Activated CD8-positive, alpha-beta T cell treated with anti-CD3 and anti-CD28 coated beads, Interleukin-2, amount 10 ng/mL, durations not matched to agents 7 days and 5 days (primary cell): ENCODE measurements at regions of chr11 and their contacts with region 1.

Region 1: GRCh38 chr11:22787551-22788162 is 41.9 kb downstream of the SVIP start:
- DNase-seq: peak; percentile 44
- ATAC-seq: peak; percentile 70
- H3K4me3 Mint-ChIP-seq: no peak overlapping the region
- H3K27ac Mint-ChIP-seq: no peak overlapping the region
- H3K4me1 Mint-ChIP-seq: no peaks in the 10 kb centered on the region
- H3K27me3 Mint-ChIP-seq: peaks cover 10% of the 10 kb centered on the region

Region 2: GRCh38 chr11:22670830-22671229 is 116.8 kb before region 1 on chr11:
- CTCF ChIA-PET with region 1: interaction called, 11 read pairs
- POLR2A ChIA-PET with region 1: no interaction called
- DNase-seq: no peak
- ATAC-seq: no peak
- H3K4me3 Mint-ChIP-seq: no peak overlapping the region
- H3K27ac Mint-ChIP-seq: no peak overlapping the region
- H3K4me1 Mint-ChIP-seq: peaks cover 5% of the 10 kb centered on the region
- H3K27me3 Mint-ChIP-seq: peaks cover 31% of the 10 kb centered on the region

Region 3: GRCh38 chr11:22763166-22763565 is 24.5 kb before region 1 on chr11:
- CTCF ChIA-PET with region 1: no interaction called
- POLR2A ChIA-PET with region 1: no interaction called
- DNase-seq: no peak
- ATAC-seq: no peak
- H3K4me3 Mint-ChIP-seq: no peak overlapping the region
- H3K27ac Mint-ChIP-seq: no peak overlapping the region
- H3K4me1 Mint-ChIP-seq: no peaks in the 10 kb centered on the region
- H3K27me3 Mint-ChIP-seq: peaks cover 2% of the 10 kb centered on the region

Region 4: DNA sequence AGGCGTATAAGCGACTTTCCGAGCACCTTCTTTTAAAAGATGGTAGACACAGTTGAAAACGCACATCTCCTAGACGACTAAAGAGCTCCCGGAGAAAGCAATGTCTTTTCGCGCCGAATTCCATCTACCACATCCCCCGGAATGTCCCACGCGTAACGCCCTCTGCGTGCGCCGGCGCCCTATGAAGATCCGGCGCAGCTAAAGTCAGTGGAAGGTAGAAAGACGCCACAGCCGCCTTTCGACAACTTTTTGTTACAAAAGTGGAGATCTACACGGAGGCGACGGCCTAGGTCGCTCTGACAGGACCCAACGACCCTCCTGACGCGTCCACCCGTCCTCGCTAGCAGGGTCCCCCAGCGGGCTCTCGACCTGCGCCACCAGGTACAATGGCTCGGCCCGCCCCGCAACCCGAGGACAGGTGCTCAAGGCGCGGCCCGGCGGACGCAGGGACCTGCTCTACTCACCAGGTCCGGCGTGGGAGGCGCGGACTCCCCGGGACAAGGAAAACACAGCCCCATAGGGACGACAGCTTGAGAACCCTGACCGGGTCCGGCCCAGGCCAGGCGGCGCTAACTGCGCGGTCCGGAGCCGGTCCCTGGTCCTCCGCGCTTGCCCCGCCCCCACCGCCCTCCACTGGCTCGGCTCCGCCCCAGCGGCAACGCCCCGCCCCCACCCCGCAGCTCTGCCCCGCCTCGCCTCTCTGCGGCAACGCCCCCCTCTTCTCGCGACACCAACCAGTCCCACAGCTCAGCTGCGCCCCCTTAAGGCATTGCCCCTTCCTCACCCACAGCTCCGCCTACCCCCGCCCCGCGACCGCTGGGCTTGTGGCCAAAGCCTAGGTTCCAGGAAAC is 41.8 kb after region 1 on chr11 and contains the start of gene SVIP:
- CTCF ChIA-PET with region 1: interaction called, 13 read pairs
- POLR2A ChIA-PET with region 1: interaction called, 3 read pairs
- DNase-seq: peak; percentile 94
- ATAC-seq: peak; percentile 90
- H3K4me3 Mint-ChIP-seq: peak within 1 kb of the TSS; percentile 78
- H3K27ac Mint-ChIP-seq: peak within 1 kb of the TSS; percentile 89
- H3K4me1 Mint-ChIP-seq: peaks cover 14% of the 10 kb centered on the region
- H3K27me3 Mint-ChIP-seq: no peaks in the 10 kb centered on the region
- total RNA-seq, gene SVIP: 32.4 to 34.0 TPM